Activated CD4-positive, alpha-beta T cell treated with anti-CD3 and anti-CD28 coated beads for 36 hours (primary cell): ENCODE measurements at regions of chr16 and their contacts with region 1.

Region 1: DNA sequence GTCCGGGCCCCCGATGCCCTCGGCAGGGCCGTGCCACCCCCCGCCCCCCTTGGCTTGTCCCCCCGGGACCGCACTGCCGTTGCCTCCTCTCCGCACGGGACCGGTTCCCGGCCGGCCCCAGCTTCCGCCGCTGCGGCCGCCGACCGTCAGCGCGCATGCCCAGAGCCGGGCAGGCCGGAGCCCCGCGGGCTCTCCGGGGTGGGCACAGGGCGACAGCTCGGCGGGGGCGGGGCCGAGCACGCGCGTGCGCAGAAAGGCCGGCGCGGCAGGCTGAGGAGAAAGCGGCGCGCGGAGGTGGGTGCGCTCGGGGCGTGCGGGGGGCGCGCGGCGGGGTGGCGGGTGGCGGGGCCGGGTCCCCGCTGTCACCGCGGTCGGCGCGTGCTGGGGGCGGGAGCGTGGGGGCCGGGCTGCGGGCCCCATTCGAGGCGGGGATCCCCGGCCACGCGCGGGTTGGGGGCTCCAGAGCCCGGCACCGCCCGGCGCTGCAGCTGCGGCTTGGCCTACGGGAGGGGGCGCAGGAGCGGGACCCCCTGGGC is at the start of gene TBC1D24:
- DNase-seq: peak; percentile 89
- ATAC-seq: peak; percentile 71
- H3K4me3 Mint-ChIP-seq: peak within 1 kb of the TSS; percentile 71
- H3K27ac Mint-ChIP-seq: peak within 1 kb of the TSS; percentile 69
- H3K4me1 Mint-ChIP-seq: peaks cover 6% of the 10 kb centered on the region
- H3K27me3 Mint-ChIP-seq: peaks cover 16% of the 10 kb centered on the region
- total RNA-seq, gene TBC1D24: 10.4 to 12.7 TPM

Region 2: DNA sequence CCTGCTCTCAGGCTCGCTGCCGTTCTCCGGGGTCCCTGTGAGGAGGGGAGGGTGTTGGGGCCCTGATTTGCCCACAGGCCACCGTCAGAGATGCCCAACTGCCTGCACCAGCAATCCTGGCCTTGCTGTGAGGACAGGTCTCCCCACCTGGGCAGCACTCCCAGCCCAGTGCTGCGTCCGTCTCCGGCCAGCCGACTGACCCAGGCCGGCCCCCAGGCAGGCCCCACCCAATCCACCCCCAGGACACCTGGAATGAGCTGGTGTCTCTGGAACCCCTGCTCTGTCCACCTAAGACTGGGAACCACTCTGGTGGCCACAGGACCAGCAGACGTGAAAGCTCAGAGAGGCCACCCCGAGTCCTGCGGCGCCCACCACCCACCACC is 359.4 kb before region 1 on chr16:
- CTCF ChIA-PET with region 1: no interaction called
- POLR2A ChIA-PET with region 1: no interaction called
- intact Hi-C with region 1: no loop called
- DNase-seq: no peak
- ATAC-seq: no peak
- H3K4me3 Mint-ChIP-seq: no peak overlapping the region
- H3K27ac Mint-ChIP-seq: no peak overlapping the region
- H3K4me1 Mint-ChIP-seq: no peaks in the 10 kb centered on the region
- H3K27me3 Mint-ChIP-seq: no peaks in the 10 kb centered on the region

Region 3: GRCh38 chr16:2205104-2205966 is 269.6 kb before region 1 on chr16 and contains the start of gene MLST8:
- CTCF ChIA-PET with region 1: no interaction called
- POLR2A ChIA-PET with region 1: no interaction called
- intact Hi-C with region 1: loop called in 1 of 2 experiments (anchors 5 kb)
- DNase-seq: peak; percentile 92
- ATAC-seq: peak; percentile 84
- H3K4me3 Mint-ChIP-seq: peak within 1 kb of the TSS; percentile 83
- H3K27ac Mint-ChIP-seq: peak within 1 kb of the TSS; percentile 84
- H3K4me1 Mint-ChIP-seq: peaks cover 16% of the 10 kb centered on the region
- H3K27me3 Mint-ChIP-seq: no peaks in the 10 kb centered on the region
- total RNA-seq, gene MLST8: 61.3 to 76.1 TPM

Region 4: DNA sequence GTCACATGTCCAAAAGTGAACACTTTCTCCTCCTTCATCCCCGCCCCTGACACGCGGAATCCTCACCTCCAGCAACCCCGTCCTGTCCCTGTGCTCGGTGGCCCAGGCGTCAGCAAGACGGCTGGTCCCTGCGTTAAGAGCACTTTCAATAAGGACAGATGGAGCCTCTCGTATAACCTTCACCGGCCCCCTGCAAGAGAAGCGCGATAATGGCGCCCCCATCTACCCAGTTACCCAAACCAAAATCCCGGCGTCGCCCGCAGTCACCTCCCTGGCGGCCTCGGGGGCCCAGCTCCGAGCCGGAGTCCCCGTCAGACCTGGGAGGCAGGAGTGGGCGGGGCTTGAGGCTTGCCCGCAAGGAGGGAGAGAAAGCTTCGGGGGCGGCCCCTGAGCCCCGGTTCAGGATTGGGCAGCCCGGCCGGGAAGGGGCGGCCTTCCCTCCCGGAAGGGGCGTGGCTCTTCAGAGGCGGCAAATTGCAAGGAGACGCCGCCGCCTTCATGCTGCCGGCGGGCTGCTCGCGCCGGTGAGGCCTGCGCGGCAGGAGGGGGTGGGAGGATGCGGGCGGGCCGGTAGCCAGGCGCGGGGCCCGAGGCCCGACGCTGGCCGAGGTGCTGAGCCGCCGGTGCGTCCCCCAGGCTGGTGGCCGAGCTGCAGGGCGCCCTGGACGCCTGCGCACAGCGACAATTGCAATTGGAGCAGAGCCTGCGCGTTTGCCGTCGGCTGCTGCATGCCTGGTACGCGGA is 15.1 kb before region 1 on chr16 and contains the start of gene TEDC2:
- CTCF ChIA-PET with region 1: no interaction called
- POLR2A ChIA-PET with region 1: interaction called, 3 read pairs
- intact Hi-C with region 1: loop called (anchors 1 to 2 kb)
- DNase-seq: peak; percentile 99
- ATAC-seq: peak; percentile 98
- H3K4me3 Mint-ChIP-seq: peak within 1 kb of the TSS; percentile 73
- H3K27ac Mint-ChIP-seq: peak within 1 kb of the TSS; percentile 67
- H3K4me1 Mint-ChIP-seq: peaks cover 6% of the 10 kb centered on the region
- H3K27me3 Mint-ChIP-seq: no peaks in the 10 kb centered on the region
- total RNA-seq, gene TEDC2: 21.0 to 23.1 TPM

Region 5: GRCh38 chr16:2531767-2532493 is 57.0 kb after region 1 on chr16:
- CTCF ChIA-PET with region 1: no interaction called
- POLR2A ChIA-PET with region 1: no interaction called
- intact Hi-C with region 1: loop called (anchors 1 to 5 kb)
- DNase-seq: peak; percentile 99
- ATAC-seq: peak; percentile 94
- H3K4me3 Mint-ChIP-seq: peak overlapping the region; percentile 82
- H3K27ac Mint-ChIP-seq: peak overlapping the region; percentile 97
- H3K4me1 Mint-ChIP-seq: peaks cover 17% of the 10 kb centered on the region
- H3K27me3 Mint-ChIP-seq: no peaks in the 10 kb centered on the region